CD4-positive, alpha-beta memory T cell (primary cell): ENCODE measurements at regions of chr4 and their contacts with region 1.

Region 1: DNA sequence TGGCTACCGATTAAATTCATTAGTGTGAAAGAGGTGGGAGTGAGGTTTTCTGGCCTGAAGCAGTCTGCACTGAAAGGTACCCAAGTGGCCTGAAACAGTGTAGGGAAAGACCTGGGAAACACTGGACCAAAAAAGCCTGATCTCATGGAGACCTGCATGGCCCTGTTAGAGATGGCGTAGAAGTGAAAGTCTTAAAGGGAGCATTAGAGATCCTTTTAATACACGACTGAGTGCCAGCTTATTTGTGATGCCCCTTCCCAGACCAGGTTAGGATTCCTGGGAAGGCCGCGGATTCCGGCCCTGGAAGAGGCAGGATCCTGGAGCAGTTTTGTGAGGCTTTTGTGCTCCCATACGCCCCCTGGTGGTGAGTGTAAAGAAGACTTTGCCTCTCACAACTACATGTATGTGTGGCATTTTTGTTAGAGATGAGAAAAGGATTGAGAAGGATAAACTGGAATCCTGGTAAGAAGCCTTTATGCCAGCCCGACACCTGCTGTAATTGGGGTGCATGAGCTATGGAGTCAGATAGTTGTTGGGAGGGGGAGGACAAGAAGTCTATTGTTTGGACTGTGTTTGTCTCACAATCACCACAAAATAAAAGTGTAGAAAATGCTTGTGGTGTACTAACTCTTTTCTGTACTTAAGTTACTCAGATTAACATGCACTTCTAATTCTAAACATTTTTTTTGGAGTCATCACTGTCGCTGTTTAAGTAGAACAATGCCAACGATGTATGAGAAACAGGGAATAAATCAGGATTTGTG is 54.0 kb downstream of the JADE1 start:
- DNase-seq: peak; percentile 56 to 69 (median 61)
- H3K4me3 ChIP-seq: no peak overlapping the region
- H3K4me3 Mint-ChIP-seq: peak overlapping the region in 2 of 8 donors; percentile 58 to 75
- H3K27ac ChIP-seq: peak overlapping the region; percentile 50
- H3K27ac Mint-ChIP-seq: peak overlapping the region; percentile 0 to 94 (median 87)
- H3K4me1 ChIP-seq: peaks cover 29% of the 10 kb centered on the region
- H3K4me1 Mint-ChIP-seq: peaks cover 36 to 49% (median 42%) of the 10 kb centered on the region in 4 donors
- H3K27me3 ChIP-seq: no peaks in the 10 kb centered on the region
- H3K27me3 Mint-ChIP-seq: no peaks in the 10 kb centered on the region

Region 2: GRCh38 chr4:128454281-128455075 is 409.0 kb before region 1 on chr4:
- CTCF ChIA-PET with region 1: interaction called, 7 read pairs
- POLR2A ChIA-PET with region 1: no interaction called
- intact Hi-C with region 1: loop called (anchors 1 kb)
- DNase-seq: peak; percentile 36 to 73 (median 45)
- H3K4me3 ChIP-seq: no peak overlapping the region
- H3K4me3 Mint-ChIP-seq: peak overlapping the region in 1 of 8 donors; percentile 31
- H3K27ac ChIP-seq: no peak overlapping the region
- H3K27ac Mint-ChIP-seq: no peak overlapping the region
- H3K4me1 ChIP-seq: no peaks in the 10 kb centered on the region
- H3K4me1 Mint-ChIP-seq: peaks cover 0 to 5% (median 3%) of the 10 kb centered on the region in 4 donors
- H3K27me3 ChIP-seq: no peaks in the 10 kb centered on the region
- H3K27me3 Mint-ChIP-seq: peaks cover 2 to 3% of the 10 kb centered on the region in 2 donors

Region 3: GRCh38 chr4:128574706-128575105 is 288.8 kb before region 1 on chr4:
- CTCF ChIA-PET with region 1: interaction called, 14 read pairs
- POLR2A ChIA-PET with region 1: interaction called, 5 read pairs
- intact Hi-C with region 1: no loop called
- DNase-seq: peak; percentile 38 to 52 (median 43)
- H3K4me3 ChIP-seq: no peak overlapping the region
- H3K4me3 Mint-ChIP-seq: no peak overlapping the region
- H3K27ac ChIP-seq: no peak overlapping the region
- H3K27ac Mint-ChIP-seq: no peak overlapping the region
- H3K4me1 ChIP-seq: no peaks in the 10 kb centered on the region
- H3K4me1 Mint-ChIP-seq: no peaks in the 10 kb centered on the region
- H3K27me3 ChIP-seq: no peaks in the 10 kb centered on the region
- H3K27me3 Mint-ChIP-seq: peaks cover 4% of the 10 kb centered on the region in 2 donors

Region 4: DNA sequence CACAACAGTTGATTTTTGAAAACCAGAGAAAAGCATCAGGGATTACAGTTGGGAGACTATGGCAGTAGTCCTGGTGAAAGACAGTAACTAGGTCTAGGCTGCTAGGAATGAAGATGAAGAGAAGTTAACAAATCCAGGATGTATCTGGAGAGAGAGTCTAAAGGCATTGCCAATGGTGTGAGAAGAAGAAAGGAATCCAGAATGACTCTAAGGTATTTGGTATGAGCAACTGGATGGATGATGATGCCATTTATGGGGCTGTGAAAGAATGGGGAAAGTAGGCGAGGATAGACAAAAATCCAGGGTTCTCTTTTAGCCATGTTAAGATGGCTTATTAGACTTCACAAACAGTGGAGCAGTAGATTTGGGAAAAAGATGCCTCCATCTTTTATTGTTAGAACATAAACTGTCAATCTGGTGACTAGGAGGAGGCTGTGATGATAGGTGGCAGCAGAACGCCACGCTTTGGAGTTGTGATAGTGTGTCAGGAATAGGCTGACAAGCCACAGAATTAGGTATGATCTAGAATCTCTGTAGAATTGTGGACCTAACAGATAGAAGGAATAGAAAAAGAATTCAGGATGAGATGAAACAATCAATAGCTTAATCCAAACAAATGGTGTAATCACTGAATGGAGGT is 81.3 kb before region 1 on chr4:
- CTCF ChIA-PET with region 1: interaction called, 52 read pairs
- POLR2A ChIA-PET with region 1: interaction called, 3 read pairs
- intact Hi-C with region 1: loop called (anchors 1 kb)
- DNase-seq: peak; percentile 47 to 64 (median 61)
- H3K4me3 ChIP-seq: no peak overlapping the region
- H3K4me3 Mint-ChIP-seq: no peak overlapping the region
- H3K27ac ChIP-seq: no peak overlapping the region
- H3K27ac Mint-ChIP-seq: no peak overlapping the region
- H3K4me1 ChIP-seq: no peaks in the 10 kb centered on the region
- H3K4me1 Mint-ChIP-seq: peaks cover 0 to 2% (median 0%) of the 10 kb centered on the region in 4 donors
- H3K27me3 ChIP-seq: no peaks in the 10 kb centered on the region
- H3K27me3 Mint-ChIP-seq: peaks cover 3 to 5% of the 10 kb centered on the region in 2 donors

Region 5: GRCh38 chr4:128879283-128879682 is 15.8 kb after region 1 on chr4:
- CTCF ChIA-PET with region 1: interaction called, 18 read pairs
- POLR2A ChIA-PET with region 1: no interaction called
- intact Hi-C with region 1: no loop called
- DNase-seq: no peak
- H3K4me3 ChIP-seq: no peak overlapping the region
- H3K4me3 Mint-ChIP-seq: no peak overlapping the region
- H3K27ac ChIP-seq: no peak overlapping the region
- H3K27ac Mint-ChIP-seq: peak overlapping the region in 2 of 7 donors; percentile 9 to 25
- H3K4me1 ChIP-seq: no peaks in the 10 kb centered on the region
- H3K4me1 Mint-ChIP-seq: peaks cover 0 to 1% (median under 1%) of the 10 kb centered on the region in 4 donors
- H3K27me3 ChIP-seq: no peaks in the 10 kb centered on the region
- H3K27me3 Mint-ChIP-seq: no peaks in the 10 kb centered on the region

Region 6: GRCh38 chr4:129093191-129093920 is 229.9 kb after region 1 on chr4 and contains the start of gene SCLT1:
- CTCF ChIA-PET with region 1: interaction called, 9 read pairs
- POLR2A ChIA-PET with region 1: no interaction called
- intact Hi-C with region 1: loop called (anchors 5 kb)
- DNase-seq: peak; percentile 93 to 98 (median 95)
- H3K4me3 ChIP-seq: peak within 1 kb of the TSS; percentile 71 to 98
- H3K4me3 Mint-ChIP-seq: peak within 1 kb of the TSS in 6 of 8 donors; percentile 10 to 57 (median 30)
- H3K27ac ChIP-seq: peak within 1 kb of the TSS; percentile 99
- H3K27ac Mint-ChIP-seq: peak within 1 kb of the TSS in 2 of 7 donors; percentile 33 to 95
- H3K4me1 ChIP-seq: peaks cover 63% of the 10 kb centered on the region
- H3K4me1 Mint-ChIP-seq: peaks cover 30 to 47% (median 38%) of the 10 kb centered on the region in 4 donors
- H3K27me3 ChIP-seq: no peaks in the 10 kb centered on the region
- H3K27me3 Mint-ChIP-seq: no peaks in the 10 kb centered on the region
- total RNA-seq, gene SCLT1: 18.2 to 20.8 TPM